A549 (cell line): ENCODE measurements at regions of chr2 and their contacts with region 1.

Region 1: GRCh38 chr2:38720613-38721241 is 30.4 kb downstream of the SRSF7 start:
- DNase-seq: peak in 1 of 2 experiments; percentile 70
- ATAC-seq: peak in 1 of 2 experiments; percentile 23; a peak in 3 of 6 replicates
- H3K4me3 ChIP-seq: no peak overlapping the region
- H3K27ac ChIP-seq: peak overlapping the region in 1 of 2 experiments; percentile 38; a peak in 2 of 6 replicates
- H3K4me1 ChIP-seq: peaks cover 30% of the 10 kb centered on the region
- CTCF ChIP-seq: no peak
- EP300 ChIP-seq: no peak
- POLR2A ChIP-seq: no peak
- RAD21 ChIP-seq: no peak

Region 2: GRCh38 chr2:37916512-37917082 is 804.1 kb before region 1 on chr2:
- CTCF ChIA-PET with region 1: no interaction called
- POLR2A ChIA-PET with region 1: no interaction called
- DNase-seq: peak in 1 of 2 experiments; percentile 11
- ATAC-seq: peak in 1 of 2 experiments; percentile 33; a peak in 2 of 6 replicates
- H3K4me3 ChIP-seq: no peak overlapping the region
- H3K27ac ChIP-seq: no peak overlapping the region
- H3K4me1 ChIP-seq: peaks cover 5% of the 10 kb centered on the region; the same call in 1 of the 3 replicates
- CTCF ChIP-seq: no peak
- EP300 ChIP-seq: no peak
- POLR2A ChIP-seq: no peak
- RAD21 ChIP-seq: no peak

Region 3: GRCh38 chr2:38740851-38741731 is 20.4 kb after region 1 on chr2:
- CTCF ChIA-PET with region 1: interaction called, 61 read pairs
- POLR2A ChIA-PET with region 1: no interaction called
- DNase-seq: peak; percentile 61 to 73
- ATAC-seq: peak; percentile 60 to 64; a peak in 5 of 6 replicates
- H3K4me3 ChIP-seq: no peak overlapping the region
- H3K27ac ChIP-seq: no peak overlapping the region
- H3K4me1 ChIP-seq: peaks cover 24% of the 10 kb centered on the region
- CTCF ChIP-seq: peak; percentile 80
- EP300 ChIP-seq: no peak
- POLR2A ChIP-seq: no peak
- RAD21 ChIP-seq: peak; percentile 48 to 74

Region 4: GRCh38 chr2:38959938-38960608 is 239.3 kb after region 1 on chr2:
- CTCF ChIA-PET with region 1: no interaction called
- POLR2A ChIA-PET with region 1: no interaction called
- DNase-seq: no peak
- ATAC-seq: no peak
- H3K4me3 ChIP-seq: no peak overlapping the region
- H3K27ac ChIP-seq: no peak overlapping the region
- H3K4me1 ChIP-seq: no peaks in the 10 kb centered on the region
- CTCF ChIP-seq: no peak
- EP300 ChIP-seq: no peak
- POLR2A ChIP-seq: no peak
- RAD21 ChIP-seq: no peak